ENCODE measurements at regions of chr2 and their contacts with region 1.

Region 1: DNA sequence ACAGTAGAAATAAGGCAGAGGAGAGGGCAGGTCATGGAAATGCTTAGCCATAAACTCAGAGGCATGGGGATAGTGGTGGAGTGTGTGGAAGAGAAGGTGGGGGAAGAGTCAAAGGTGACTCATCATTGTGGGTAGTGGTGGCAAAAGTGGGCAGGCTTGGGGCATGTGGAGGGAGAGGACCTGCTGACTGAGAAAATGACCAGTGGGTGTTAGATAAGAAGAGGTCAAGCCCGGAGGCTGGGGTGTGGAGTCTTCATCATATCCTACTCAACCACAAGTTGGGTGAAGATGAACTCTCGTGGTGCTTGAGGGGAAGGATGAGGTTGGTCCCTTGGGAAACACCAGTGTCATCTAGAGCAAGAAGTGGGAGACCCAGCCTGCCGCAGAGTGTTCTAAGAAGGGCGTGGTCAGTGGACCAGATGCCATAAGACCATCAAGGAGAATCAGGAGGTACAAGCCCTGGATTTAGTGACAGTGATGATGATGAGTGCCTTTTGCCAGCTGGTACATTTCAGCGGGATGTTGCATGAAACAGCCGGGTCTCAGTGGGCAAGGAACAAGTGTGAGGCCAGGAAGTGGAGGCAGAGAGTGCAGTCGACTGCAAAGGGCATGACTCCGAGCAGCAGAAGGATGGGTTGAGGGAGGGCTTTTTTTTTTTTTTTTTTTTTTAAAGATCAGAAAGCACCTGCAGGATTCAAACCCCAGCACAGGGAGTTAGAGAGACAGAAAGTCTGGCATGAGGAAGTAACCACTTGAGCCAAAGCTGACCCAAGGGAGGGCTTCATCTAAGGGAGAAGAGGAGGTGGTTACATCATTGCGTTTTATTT is 122.6 kb upstream of the SPRED2 start:
- DNase-seq: no peak
- H3K4me3 ChIP-seq: no peak overlapping the region
- H3K27ac ChIP-seq: no peak overlapping the region
- H3K4me1 ChIP-seq: no peaks in the 10 kb centered on the region
- H3K27me3 ChIP-seq: no peaks in the 10 kb centered on the region
- CTCF ChIP-seq: no peak

Region 2: DNA sequence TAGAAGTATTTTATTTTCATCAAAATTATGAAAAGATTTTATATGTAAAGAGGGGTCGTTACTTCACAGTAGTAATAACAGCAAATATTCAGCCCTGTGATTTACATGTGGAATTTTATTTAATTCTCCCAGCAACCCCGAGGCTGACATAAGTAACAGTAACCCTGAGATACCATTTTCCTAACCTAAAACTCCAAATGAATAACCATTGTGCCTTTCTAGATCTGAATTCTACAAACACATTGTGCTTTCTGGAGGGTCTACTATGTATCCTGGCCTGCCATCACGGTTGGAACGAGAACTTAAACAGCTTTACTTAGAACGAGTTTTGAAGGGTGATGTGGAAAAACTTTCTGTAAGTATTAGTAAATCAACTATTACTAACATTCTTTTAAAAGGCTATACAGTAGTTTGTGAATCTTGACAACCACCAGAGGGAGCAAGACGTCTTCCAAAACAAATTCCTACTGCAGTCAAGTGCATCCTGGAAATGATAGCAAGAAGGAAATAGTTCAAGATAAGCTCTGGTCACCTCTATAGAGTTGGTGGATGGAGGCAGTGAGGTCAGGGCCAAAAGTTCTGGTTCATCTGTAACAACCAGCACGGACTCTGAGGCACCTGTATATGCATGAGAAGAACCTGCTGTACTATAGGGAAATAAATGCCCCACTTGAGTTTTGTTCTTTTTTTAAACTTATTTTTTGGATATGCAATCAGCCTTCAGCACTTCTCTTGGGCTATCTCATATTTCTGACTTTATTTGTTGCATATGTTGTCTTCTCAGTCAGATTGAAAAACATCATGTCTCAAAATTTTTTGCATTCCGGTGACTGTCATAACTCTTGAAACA is 289.9 kb before region 1 on chr2:
- intact Hi-C with region 1: loop called (anchors 2 kb)
- DNase-seq: peak; percentile 55
- H3K4me3 ChIP-seq: no peak overlapping the region
- H3K27ac ChIP-seq: no peak overlapping the region
- H3K4me1 ChIP-seq: no peaks in the 10 kb centered on the region
- H3K27me3 ChIP-seq: no peaks in the 10 kb centered on the region
- CTCF ChIP-seq: peak; percentile 49

Region 3: DNA sequence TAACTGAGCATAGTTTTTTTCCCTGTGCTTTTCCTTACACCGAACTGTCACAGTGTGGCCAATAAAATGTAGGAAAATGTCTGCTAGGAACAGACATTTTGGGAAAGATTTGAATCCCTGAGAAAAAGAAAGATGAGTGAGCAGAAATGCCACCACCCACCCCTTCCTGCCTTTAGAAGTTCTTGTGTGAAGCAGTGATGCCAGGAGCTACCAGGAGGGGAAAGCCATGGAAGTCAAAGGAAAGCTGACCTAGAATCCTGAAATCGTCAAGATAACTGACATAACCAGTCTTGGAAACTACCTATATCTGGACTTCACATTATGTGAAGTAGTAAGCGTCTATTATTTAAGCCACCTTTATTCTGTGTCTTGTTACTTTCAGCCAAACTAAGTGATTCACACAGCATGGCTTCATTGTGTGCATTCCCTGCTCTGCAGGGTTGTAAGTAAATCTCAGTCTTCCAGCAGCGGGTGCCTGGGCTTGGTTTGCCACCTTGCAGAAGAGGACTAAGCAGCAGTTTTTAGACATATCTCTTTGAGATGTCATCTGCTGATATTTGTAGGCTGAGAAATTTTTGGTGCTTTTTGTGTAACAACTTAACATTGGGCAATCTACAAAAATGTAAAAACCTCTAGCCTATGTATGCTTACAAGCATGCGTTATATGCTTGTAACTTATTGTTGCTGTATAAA is 111.3 kb before region 1 on chr2:
- intact Hi-C with region 1: loop called (anchors 5 kb)
- DNase-seq: no peak
- H3K4me3 ChIP-seq: no peak overlapping the region
- H3K27ac ChIP-seq: no peak overlapping the region
- H3K4me1 ChIP-seq: no peaks in the 10 kb centered on the region
- H3K27me3 ChIP-seq: no peaks in the 10 kb centered on the region
- CTCF ChIP-seq: no peak